Panc1 (cell line): ENCODE measurements at regions of chr16 and their contacts with region 1.

Region 1: DNA sequence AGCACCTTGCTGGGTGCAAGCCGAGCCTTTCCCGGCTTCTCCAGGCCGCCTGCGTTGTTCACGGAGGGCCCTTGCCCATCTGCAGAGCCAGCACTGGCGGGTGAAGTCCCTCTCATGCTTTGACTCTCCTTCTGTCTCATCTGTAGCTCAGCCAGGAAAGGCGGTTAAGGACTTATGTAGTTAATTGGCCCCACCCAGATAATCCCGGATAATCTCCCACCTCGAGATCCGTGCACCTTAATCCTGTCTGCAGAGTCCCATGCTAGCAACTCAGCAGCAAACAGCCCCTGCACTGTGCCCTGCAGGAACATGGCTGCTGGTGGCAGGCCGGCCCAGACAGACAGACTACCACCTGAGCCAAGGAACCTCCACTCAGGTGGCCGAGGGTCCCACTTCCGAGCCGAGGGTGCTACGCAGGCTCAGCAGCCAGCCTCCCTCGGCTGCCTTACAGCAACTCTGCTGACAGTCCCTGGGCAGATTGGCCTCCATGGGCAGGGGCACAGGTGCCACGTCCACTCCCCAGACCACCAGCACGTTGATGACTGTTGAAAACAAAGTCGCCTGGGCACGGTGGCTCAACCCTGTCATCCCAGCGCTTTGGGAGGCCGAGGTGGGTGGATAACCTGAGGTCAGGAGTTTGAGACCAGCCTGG is 16.9 kb downstream of the RAB40C start:
- DNase-seq: no peak
- ATAC-seq: no peak
- H3K4me3 ChIP-seq: no peak overlapping the region
- H3K27ac ChIP-seq: no peak overlapping the region
- H3K4me1 ChIP-seq: no peaks in the 10 kb centered on the region
- H3K27me3 ChIP-seq: no peaks in the 10 kb centered on the region
- CTCF ChIP-seq: no peak

Region 2: GRCh38 chr16:203246-203645 is 403.5 kb before region 1 on chr16:
- CTCF ChIA-PET with region 1: no interaction called
- POLR2A ChIA-PET with region 1: no interaction called
- in situ Hi-C with region 1: no loop called
- intact Hi-C with region 1: no loop called
- DNase-seq: no peak
- ATAC-seq: no peak
- H3K4me3 ChIP-seq: no peak overlapping the region
- H3K27ac ChIP-seq: no peak overlapping the region
- H3K4me1 ChIP-seq: no peaks in the 10 kb centered on the region
- H3K27me3 ChIP-seq: no peaks in the 10 kb centered on the region
- CTCF ChIP-seq: no peak

Region 3: DNA sequence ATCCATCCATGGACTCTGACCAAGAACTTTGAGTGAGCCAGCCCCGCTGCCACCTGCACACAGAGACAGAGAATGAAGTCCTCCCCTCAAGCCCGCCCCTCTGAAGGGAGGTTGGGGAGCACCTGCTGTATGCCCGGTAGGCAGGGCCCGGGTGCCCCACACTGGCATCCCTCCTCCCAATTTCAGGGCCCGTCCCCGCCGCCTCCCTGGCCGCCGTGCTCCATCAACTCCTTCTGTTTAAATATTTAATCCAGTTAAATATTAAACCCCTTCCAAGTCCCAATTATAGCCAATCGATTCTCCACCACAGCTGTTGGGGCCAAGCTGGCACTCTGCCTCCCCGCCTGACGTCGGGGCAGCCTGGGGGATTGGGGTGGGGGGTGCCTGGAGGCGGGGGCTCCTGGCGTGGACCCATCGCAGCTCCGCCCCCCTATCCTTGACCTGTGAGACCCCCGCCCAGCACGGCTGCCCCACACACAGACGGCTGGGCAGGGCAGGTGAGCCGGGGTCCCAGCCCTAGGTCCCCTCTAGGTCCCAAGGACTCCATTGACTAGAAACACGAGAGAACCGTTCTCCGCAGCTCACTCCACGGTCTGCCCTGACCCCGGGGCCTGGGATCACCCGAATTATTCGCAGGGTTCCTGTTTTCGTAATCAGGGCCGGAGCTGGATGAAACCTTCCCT is 528.1 kb after region 1 on chr16:
- CTCF ChIA-PET with region 1: interaction called, 11 read pairs
- POLR2A ChIA-PET with region 1: no interaction called
- in situ Hi-C with region 1: no loop called
- intact Hi-C with region 1: no loop called
- DNase-seq: no peak
- ATAC-seq: no peak
- H3K4me3 ChIP-seq: no peak overlapping the region
- H3K27ac ChIP-seq: no peak overlapping the region
- H3K4me1 ChIP-seq: peaks cover 11% of the 10 kb centered on the region
- H3K27me3 ChIP-seq: no peaks in the 10 kb centered on the region
- CTCF ChIP-seq: no peak